Adrenal gland (tissue), 19 donors: ENCODE measurements at regions of chrX and their contacts with region 1.

Region 1: GRCh38 chrX:50204364-50204899 is at the start of gene CCNB3:
- DNase-seq: peak; percentile 60 to 86 (median 77)
- H3K4me3 ChIP-seq: peak within 1 kb of the TSS in 1 of 4 donors; percentile 43
- H3K27ac ChIP-seq: peak within 1 kb of the TSS in 2 of 5 donors; percentile 28 to 54
- H3K4me1 ChIP-seq: peaks cover 0 to 8% of the 10 kb centered on the region in 2 donors
- H3K27me3 ChIP-seq: no peaks in the 10 kb centered on the region
- CTCF ChIP-seq: peak; percentile 41 to 92 (median 68)
- POLR2A ChIP-seq: peak in 1 of 2 donors; percentile 47
- total RNA-seq, gene CCNB3: 0.24 to 2.1 (median 0.81) TPM

Region 2: DNA sequence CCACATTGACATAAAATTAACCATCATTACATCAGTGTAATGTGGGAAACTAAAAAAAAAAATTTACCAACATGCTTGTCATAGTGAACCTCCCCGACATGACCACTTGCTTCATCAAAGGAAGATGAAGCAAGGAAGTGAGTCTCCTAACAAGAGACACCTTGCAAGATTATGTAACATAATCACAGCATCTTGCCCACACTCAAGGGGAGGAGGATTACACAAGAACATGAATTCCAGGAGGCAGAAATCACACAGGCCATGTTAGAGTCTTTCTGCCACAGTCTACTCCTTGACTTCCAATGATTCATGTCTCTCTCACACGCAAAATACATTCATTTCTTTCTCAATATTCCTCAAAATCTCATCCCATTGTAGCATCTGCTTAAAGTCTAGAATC is 97.0 kb before region 1 on chrX:
- intact Hi-C with region 1: loop called in 1 of 2 experiments (anchors 5 kb)
- DNase-seq: no peak
- H3K4me3 ChIP-seq: no peak overlapping the region
- H3K27ac ChIP-seq: no peak overlapping the region
- H3K4me1 ChIP-seq: no peaks in the 10 kb centered on the region
- H3K27me3 ChIP-seq: peaks cover 4% of the 10 kb centered on the region
- CTCF ChIP-seq: no peak
- POLR2A ChIP-seq: no peak